ENCODE measurements at regions of chr2 and their contacts with region 1.

Region 1: GRCh38 chr2:7044261-7045250 is 127.3 kb downstream of the RNF144A start:
- DNase-seq: peak; percentile 15 to 79 (median 52)
- ATAC-seq: peak; percentile 69 to 78 (median 74)
- H3K4me3 ChIP-seq: no peak overlapping the region
- H3K4me3 Mint-ChIP-seq: no peak overlapping the region
- H3K27ac ChIP-seq: no peak overlapping the region
- H3K27ac Mint-ChIP-seq: peak overlapping the region; percentile 25 to 48
- H3K4me1 ChIP-seq: peaks cover 0 to 6% of the 10 kb centered on the region in 2 experiments
- H3K4me1 Mint-ChIP-seq: peaks cover 20 to 27% (median 25%) of the 10 kb centered on the region in 3 donors
- H3K27me3 ChIP-seq: no peaks in the 10 kb centered on the region
- H3K27me3 Mint-ChIP-seq: peaks cover 0 to 2% of the 10 kb centered on the region in 2 donors

Region 2: GRCh38 chr2:7034316-7034715 is 10.2 kb before region 1 on chr2:
- CTCF ChIA-PET with region 1: interaction called, 8 to 10 read pairs
- POLR2A ChIA-PET with region 1: no interaction called
- DNase-seq: no peak
- ATAC-seq: no peak
- H3K4me3 ChIP-seq: no peak overlapping the region
- H3K4me3 Mint-ChIP-seq: no peak overlapping the region
- H3K27ac ChIP-seq: no peak overlapping the region
- H3K27ac Mint-ChIP-seq: no peak overlapping the region
- H3K4me1 ChIP-seq: peaks cover 0 to 11% of the 10 kb centered on the region in 2 experiments
- H3K4me1 Mint-ChIP-seq: peaks cover 15 to 18% (median 15%) of the 10 kb centered on the region in 3 donors
- H3K27me3 ChIP-seq: no peaks in the 10 kb centered on the region
- H3K27me3 Mint-ChIP-seq: no peaks in the 10 kb centered on the region

Region 3: DNA sequence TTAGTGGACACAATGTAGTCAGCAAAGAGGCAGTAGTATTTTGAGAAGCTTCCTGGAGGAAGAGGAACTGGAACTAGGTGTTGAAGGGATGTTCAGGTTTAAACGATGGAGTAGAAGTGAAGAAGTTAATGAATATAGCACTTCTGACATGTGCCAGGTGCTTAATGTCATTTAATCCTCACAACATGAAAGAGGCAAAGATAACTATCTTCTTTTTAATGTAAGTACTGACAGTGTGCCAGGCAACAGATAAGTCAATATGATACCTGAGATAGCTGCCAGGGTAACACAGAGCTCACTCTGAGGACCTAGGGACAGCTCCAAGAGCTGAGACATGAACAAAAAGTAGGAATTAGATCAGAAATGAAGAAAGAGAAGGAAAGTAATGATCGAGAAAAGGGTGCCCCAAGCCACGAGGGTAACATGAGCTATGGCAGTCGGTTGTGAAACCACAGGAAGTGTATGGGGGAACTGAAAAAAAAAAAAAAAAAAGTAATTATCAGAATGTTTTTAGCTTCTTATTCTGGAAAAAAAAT is 13.4 kb after region 1 on chr2:
- CTCF ChIA-PET with region 1: interaction called, 9 to 26 read pairs
- POLR2A ChIA-PET with region 1: no interaction called
- DNase-seq: peak in 16 of 35 experiments; percentile 2 to 47 (median 19)
- ATAC-seq: peak; percentile 55 to 66 (median 56)
- H3K4me3 ChIP-seq: peak overlapping the region in 1 of 2 donors; percentile 11
- H3K4me3 Mint-ChIP-seq: peak overlapping the region; percentile 44 to 77 (median 73)
- H3K27ac ChIP-seq: peak overlapping the region; percentile 77
- H3K27ac Mint-ChIP-seq: no peak overlapping the region
- H3K4me1 ChIP-seq: peaks cover 32 to 39% of the 10 kb centered on the region in 2 experiments
- H3K4me1 Mint-ChIP-seq: peaks cover 8 to 28% (median 25%) of the 10 kb centered on the region in 3 donors
- H3K27me3 ChIP-seq: no peaks in the 10 kb centered on the region
- H3K27me3 Mint-ChIP-seq: no peaks in the 10 kb centered on the region